ENCODE measurements at regions of chr19 and their contacts with region 1.

Region 1: GRCh38 chr19:29714953-29715700 is at the start of gene C19orf12:
- DNase-seq: peak; percentile 76
- H3K4me3 ChIP-seq: peak within 1 kb of the TSS; percentile 73 to 98 (median 87)
- H3K27ac ChIP-seq: peak within 1 kb of the TSS; percentile 90 to 97 (median 92)
- H3K4me1 ChIP-seq: peaks cover 0 to 53% (median 34%) of the 10 kb centered on the region in 4 donors
- H3K27me3 ChIP-seq: no peaks in the 10 kb centered on the region
- CTCF ChIP-seq: no peak
- EP300 ChIP-seq: no peak
- POLR2A ChIP-seq: peak; percentile 38 to 68
- total RNA-seq, gene C19orf12: 32.1 to 36.0 (median 34.2) TPM

Region 2: GRCh38 chr19:29672933-29673336 is 42.2 kb before region 1 on chr19:
- intact Hi-C with region 1: no loop called
- DNase-seq: peak; percentile 56
- H3K4me3 ChIP-seq: no peak overlapping the region
- H3K27ac ChIP-seq: no peak overlapping the region
- H3K4me1 ChIP-seq: peaks cover 0 to 57% (median 40%) of the 10 kb centered on the region in 4 donors
- H3K27me3 ChIP-seq: no peaks in the 10 kb centered on the region
- CTCF ChIP-seq: no peak
- EP300 ChIP-seq: no peak
- POLR2A ChIP-seq: no peak

Region 3: GRCh38 chr19:29694669-29695627 is 20.2 kb before region 1 on chr19:
- intact Hi-C with region 1: loop called (anchors 1 kb)
- DNase-seq: peak; percentile 95
- H3K4me3 ChIP-seq: no peak overlapping the region
- H3K27ac ChIP-seq: peak overlapping the region; percentile 55 to 62 (median 60)
- H3K4me1 ChIP-seq: peaks cover 0 to 15% (median 14%) of the 10 kb centered on the region in 4 donors
- H3K27me3 ChIP-seq: no peaks in the 10 kb centered on the region
- CTCF ChIP-seq: peak; percentile 73 to 92 (median 81)
- EP300 ChIP-seq: no peak
- POLR2A ChIP-seq: no peak

Region 4: DNA sequence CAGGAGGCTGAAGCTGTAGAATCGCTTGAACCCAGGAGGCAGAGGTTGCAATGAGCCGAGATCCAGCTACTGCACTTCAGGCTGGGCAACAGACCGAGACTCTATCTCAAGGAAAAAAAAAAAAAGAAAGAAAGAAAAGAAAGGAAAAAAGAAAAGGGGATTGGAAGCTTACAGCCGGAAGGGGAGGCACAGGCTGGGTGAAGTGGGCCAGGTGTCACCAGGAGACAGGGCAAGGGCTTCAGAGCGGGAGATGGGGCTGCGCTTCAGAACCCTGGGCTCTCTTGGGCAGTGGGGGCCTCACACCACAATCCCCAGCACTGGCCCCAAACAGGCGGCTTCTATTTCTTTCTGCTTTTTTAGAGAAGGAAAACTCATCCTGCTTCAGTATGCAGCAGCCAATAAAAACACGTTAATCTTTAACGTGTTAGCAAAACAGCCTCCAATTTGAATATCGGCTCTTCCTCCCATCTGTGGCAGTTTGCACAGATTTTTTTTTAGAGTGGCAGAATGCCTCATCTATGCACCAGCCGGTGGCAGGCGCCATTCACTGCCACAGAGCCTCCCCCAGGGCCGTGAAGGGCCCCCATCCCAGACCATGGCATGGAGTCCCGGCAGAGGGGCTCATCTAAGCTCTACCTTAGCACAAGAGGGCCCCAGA is 46.6 kb after region 1 on chr19:
- intact Hi-C with region 1: no loop called
- DNase-seq: no peak
- H3K4me3 ChIP-seq: no peak overlapping the region
- H3K27ac ChIP-seq: no peak overlapping the region
- H3K4me1 ChIP-seq: no peaks in the 10 kb centered on the region
- H3K27me3 ChIP-seq: peaks cover 0 to 7% (median 0%) of the 10 kb centered on the region in 3 donors
- CTCF ChIP-seq: no peak
- EP300 ChIP-seq: no peak
- POLR2A ChIP-seq: no peak